WTC11 (cell line): ENCODE measurements at regions of chr20 and their contacts with region 1.

Region 1: GRCh38 chr20:3710703-3711483 is 1.5 kb downstream of the SIGLEC1 start:
- DNase-seq: peak; percentile 92
- ATAC-seq: peak; percentile 81
- H3K4me3 Mint-ChIP-seq: no peak overlapping the region
- H3K27ac Mint-ChIP-seq: no peak overlapping the region
- H3K4me1 Mint-ChIP-seq: no peaks in the 10 kb centered on the region
- H3K27me3 Mint-ChIP-seq: no peaks in the 10 kb centered on the region
- CTCF ChIP-seq: peak; percentile 99

Region 2: DNA sequence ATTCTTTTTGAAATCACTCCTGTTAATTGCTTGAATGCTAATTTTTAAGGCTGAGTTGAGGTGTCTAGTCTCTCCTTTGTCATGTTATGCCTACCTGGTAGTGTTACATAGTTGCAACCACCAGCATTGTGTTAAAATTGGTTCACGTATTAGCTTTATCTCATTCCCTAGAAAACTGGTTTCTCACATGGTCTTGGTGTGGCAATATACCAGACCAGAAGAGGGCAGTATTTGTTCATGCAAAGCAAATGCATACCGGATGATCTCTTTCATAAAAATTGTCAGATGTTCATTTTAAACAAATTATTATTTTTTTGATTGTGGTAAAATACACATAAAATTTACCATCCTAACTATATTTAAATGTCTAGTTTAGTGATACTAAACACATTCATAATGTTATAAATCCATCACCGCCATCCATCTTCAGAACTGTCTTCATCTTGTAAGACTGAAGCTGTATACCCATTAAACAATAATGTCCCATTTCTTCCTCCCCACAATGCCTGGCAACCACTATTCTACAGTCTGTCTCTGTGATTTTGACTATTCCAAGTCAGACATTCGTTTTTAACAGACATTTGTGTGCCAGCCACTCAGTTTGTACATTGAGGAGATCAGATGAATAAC is 147.2 kb before region 1 on chr20:
- CTCF ChIA-PET with region 1: interaction called, 16 read pairs
- POLR2A ChIA-PET with region 1: interaction called, 6 read pairs
- DNase-seq: no peak
- ATAC-seq: peak; percentile 50; the same call in 1 of the 2 replicates
- H3K4me3 Mint-ChIP-seq: no peak overlapping the region
- H3K27ac Mint-ChIP-seq: no peak overlapping the region
- H3K4me1 Mint-ChIP-seq: peaks cover 10% of the 10 kb centered on the region
- H3K27me3 Mint-ChIP-seq: no peaks in the 10 kb centered on the region
- CTCF ChIP-seq: 0 out of 2 replicates have a peak, but pooled peaks have one; percentile 25

Region 3: GRCh38 chr20:3679749-3680700 is 30.9 kb before region 1 on chr20:
- CTCF ChIA-PET with region 1: interaction called, 106 read pairs
- POLR2A ChIA-PET with region 1: interaction called, 5 read pairs
- DNase-seq: peak; percentile 42
- ATAC-seq: peak; percentile 8
- H3K4me3 Mint-ChIP-seq: peak overlapping the region; percentile 34
- H3K27ac Mint-ChIP-seq: no peak overlapping the region
- H3K4me1 Mint-ChIP-seq: peaks cover 37% of the 10 kb centered on the region
- H3K27me3 Mint-ChIP-seq: peaks cover 25% of the 10 kb centered on the region
- CTCF ChIP-seq: no peak

Region 4: DNA sequence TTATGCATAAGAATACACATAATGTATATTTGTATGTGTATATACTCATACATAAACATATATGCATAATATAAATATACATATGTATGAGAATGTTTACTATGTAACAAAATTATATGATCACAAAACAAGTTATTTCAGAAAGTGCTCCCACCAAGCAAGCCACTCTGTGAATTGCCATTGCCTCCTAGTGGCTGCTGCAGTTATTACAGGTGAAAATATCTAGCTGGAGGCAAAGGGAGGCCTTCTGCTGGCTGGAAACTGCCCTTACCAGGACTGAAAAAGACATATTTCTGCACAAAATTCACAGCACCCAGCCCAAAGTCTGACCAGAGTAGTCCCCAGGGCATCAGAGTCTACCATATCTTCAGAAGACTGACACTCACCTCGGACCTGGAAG is 14.7 kb before region 1 on chr20:
- CTCF ChIA-PET with region 1: interaction called, 47 read pairs
- POLR2A ChIA-PET with region 1: no interaction called
- DNase-seq: no peak
- ATAC-seq: no peak
- H3K4me3 Mint-ChIP-seq: no peak overlapping the region
- H3K27ac Mint-ChIP-seq: no peak overlapping the region
- H3K4me1 Mint-ChIP-seq: no peaks in the 10 kb centered on the region
- H3K27me3 Mint-ChIP-seq: no peaks in the 10 kb centered on the region
- CTCF ChIP-seq: peak; percentile 67; the same call in 1 of the 2 replicates

Region 5: GRCh38 chr20:3727401-3728021 is 16.6 kb after region 1 on chr20:
- CTCF ChIA-PET with region 1: interaction called, 13 read pairs
- POLR2A ChIA-PET with region 1: no interaction called
- DNase-seq: no peak
- ATAC-seq: no peak
- H3K4me3 Mint-ChIP-seq: no peak overlapping the region
- H3K27ac Mint-ChIP-seq: no peak overlapping the region
- H3K4me1 Mint-ChIP-seq: peaks cover 16% of the 10 kb centered on the region
- H3K27me3 Mint-ChIP-seq: peaks cover 38% of the 10 kb centered on the region
- CTCF ChIP-seq: no peak

Region 6: GRCh38 chr20:3739054-3739925 is 28.4 kb after region 1 on chr20:
- CTCF ChIA-PET with region 1: interaction called, 26 read pairs
- POLR2A ChIA-PET with region 1: no interaction called
- DNase-seq: no peak
- ATAC-seq: peak; percentile 35
- H3K4me3 Mint-ChIP-seq: no peak overlapping the region
- H3K27ac Mint-ChIP-seq: peak overlapping the region; percentile 68
- H3K4me1 Mint-ChIP-seq: peaks cover 24% of the 10 kb centered on the region
- H3K27me3 Mint-ChIP-seq: peaks cover 2% of the 10 kb centered on the region
- CTCF ChIP-seq: no peak

Region 7: DNA sequence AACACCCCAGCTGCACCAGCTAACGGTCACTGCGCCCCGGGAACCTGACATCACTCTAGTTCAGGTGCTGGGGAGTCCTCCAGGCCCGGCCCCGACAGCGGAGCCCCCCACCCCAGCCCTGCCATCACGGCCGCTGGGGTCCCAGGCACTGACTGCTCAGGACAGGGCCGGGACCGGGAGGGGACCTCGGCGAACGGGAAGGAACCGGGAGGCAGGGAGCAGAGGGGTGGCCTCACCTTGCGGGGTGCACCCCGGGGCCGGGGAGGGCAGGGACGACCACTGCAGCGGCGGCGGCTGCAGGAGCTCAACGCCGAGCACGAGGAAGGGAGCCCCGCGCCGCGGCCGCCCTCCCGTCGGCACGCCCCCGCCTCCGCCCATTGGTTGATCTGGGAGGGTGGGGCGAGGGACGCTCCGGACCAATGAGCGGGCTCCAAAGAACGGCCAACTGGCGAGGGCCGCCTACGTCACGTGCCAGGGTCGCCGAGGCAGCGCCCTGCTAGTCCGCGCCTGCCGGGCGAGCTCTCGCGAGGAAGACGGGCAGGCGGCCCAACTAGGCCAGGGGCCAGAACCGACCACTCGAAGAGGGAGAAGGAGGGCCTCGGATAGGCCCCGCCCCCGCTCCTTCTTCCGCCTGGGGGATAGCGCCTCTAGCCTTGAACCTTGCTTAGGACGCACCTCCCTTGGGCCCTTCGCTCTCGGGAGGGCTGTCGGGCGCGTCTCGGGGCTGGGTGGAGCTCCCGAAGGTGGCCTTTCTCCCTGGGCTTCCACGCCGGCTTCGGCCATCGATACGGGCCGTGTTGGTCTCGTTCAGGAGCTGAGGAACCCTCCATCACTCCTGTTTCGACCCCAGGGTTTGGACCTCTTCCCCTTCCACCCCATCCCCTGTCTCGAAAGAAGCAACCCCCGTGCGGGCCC is 56.8 kb after region 1 on chr20 and contains the start of gene ADISSP:
- CTCF ChIA-PET with region 1: interaction called, 33 read pairs
- POLR2A ChIA-PET with region 1: no interaction called
- DNase-seq: peak; percentile 99
- ATAC-seq: peak; percentile 94
- H3K4me3 Mint-ChIP-seq: peak within 1 kb of the TSS; percentile 94
- H3K27ac Mint-ChIP-seq: peak within 1 kb of the TSS; percentile 79; the same call in 1 of the 2 replicates
- H3K4me1 Mint-ChIP-seq: peaks cover 19% of the 10 kb centered on the region
- H3K27me3 Mint-ChIP-seq: peaks cover 13% of the 10 kb centered on the region
- CTCF ChIP-seq: no peak
- total RNA-seq, gene ADISSP: 109 to 129 TPM (median 113 TPM) in 3 replicates